Colonic mucosa (tissue), 4 donors: ENCODE measurements at regions of chr11 and their contacts with region 1.

Region 1: DNA sequence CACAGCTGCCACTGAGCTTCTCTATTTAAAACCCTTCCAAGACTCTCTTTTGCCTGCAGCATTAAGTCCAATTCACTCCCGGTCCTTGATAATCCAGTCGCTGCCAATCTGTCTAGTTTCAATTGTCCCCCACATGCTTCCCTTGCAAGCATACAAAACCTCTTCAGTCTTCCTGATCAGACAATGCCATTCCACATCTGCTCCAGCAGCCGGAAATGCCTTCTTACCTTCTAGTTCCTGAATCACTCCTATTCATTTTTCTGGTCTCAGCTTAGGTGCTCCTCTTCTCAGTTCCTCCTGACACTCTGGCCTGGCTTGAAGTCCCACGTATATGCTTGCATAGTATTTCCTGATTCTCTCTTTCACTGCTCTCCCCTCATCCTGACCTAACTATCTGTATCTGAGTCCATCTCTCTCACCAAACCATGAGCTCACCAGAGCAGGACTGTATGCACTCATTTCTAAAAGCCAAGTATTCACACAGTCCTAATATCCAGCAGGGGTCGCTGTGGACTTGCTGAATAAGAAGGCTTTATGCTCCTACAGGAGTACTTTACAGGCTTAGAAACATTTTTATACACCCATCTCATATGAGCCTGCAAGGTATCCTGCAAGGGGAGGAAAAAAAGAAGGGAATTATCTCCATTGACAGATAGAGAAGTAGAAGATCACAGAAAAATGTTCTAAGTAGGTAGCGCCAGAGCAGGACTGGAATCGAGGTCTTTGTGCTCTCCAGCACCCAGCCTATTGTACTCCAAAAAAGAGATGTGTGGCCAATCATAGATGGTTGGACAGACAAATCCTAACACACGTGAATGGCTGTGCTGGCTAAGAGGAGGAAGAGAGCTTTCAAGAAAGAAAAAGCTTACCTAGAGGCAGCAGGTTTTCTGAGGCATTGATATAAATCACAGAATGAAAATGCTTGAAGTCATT is 19.2 kb downstream of the XRRA1 start:
- DNase-seq: peak; percentile 78
- H3K4me3 ChIP-seq: no peak overlapping the region
- H3K27ac ChIP-seq: no peak overlapping the region
- H3K4me1 ChIP-seq: no peaks in the 10 kb centered on the region
- H3K27me3 ChIP-seq: no peaks in the 10 kb centered on the region
- CTCF ChIP-seq: peak; percentile 79

Region 2: GRCh38 chr11:74581954-74582547 is 347.6 kb before region 1 on chr11:
- intact Hi-C with region 1: no loop called
- DNase-seq: peak; percentile 79
- H3K4me3 ChIP-seq: no peak overlapping the region
- H3K27ac ChIP-seq: peak overlapping the region; percentile 43
- H3K4me1 ChIP-seq: no peaks in the 10 kb centered on the region
- H3K27me3 ChIP-seq: no peaks in the 10 kb centered on the region
- CTCF ChIP-seq: no peak

Region 3: DNA sequence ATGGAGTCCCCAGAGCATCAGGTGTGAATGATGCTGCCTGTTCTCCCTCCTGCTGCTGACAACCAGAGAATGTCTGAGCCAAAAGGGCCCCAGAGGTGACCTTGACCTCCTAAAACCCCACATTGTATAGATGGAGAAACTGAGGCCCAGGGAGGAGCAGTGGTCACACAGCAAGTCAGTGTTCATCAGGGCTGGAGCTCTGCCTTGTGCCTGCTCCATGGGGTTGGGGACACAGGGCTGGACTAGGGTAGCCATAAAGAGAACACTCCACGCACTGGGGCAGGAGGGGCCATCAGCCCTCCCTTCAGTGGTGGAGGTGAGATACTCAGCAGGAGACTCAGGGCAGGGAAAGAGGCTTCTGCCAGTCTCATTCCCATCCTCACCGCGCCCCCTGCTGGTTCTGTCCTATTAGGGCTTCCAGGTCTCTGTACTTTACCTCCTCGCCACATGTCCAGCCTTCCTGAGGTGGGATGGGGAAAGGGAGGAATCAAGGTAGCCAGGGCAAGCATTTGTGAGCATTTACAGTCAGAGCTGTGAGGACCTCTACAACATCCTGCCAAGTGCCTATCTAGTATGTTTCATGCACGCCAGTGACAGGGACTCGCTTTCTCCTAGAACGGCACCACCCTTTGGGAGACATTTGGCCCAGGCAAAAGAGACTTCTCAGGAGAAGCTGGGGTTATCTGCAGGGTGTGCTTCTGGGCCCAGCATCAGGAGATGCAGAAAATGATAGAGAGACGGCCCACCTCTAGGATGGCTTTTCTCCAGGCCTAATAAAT is 102.3 kb after region 1 on chr11:
- intact Hi-C with region 1: loop called (anchors 2 kb)
- DNase-seq: peak; percentile 77
- H3K4me3 ChIP-seq: no peak overlapping the region
- H3K27ac ChIP-seq: no peak overlapping the region
- H3K4me1 ChIP-seq: no peaks in the 10 kb centered on the region
- H3K27me3 ChIP-seq: no peaks in the 10 kb centered on the region
- CTCF ChIP-seq: peak; percentile 59

Region 4: DNA sequence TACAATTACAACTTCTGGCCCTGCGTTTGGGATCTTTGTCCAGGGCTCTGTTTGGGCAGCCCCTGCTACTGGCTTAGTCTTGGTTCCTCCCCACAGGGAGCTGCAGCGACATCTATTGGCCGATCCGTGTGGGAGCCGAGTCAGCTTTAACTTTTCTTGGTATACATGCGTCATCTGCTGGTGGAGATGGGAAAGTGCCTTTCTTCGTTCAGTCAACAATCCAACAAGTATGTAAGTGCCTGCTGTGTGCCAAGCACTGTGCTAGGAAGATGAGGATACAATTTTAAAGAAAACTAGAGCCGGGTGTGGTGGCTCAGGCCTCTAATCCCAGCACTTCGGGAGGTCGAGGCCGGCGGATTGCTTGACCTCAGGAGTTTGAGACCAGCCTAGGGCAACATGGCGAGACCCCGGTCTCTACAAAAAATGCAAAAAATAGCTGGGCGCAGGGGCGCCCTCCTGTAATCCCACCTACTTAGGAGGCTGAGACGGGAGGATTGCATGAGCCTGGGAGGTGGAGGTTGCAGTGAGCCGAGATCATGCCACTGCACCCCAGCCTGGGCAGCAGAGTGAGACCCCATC is 319.1 kb after region 1 on chr11:
- intact Hi-C with region 1: loop called (anchors 5 kb)
- DNase-seq: peak; percentile 93
- H3K4me3 ChIP-seq: no peak overlapping the region
- H3K27ac ChIP-seq: no peak overlapping the region
- H3K4me1 ChIP-seq: no peaks in the 10 kb centered on the region
- H3K27me3 ChIP-seq: peaks cover 2% of the 10 kb centered on the region
- CTCF ChIP-seq: peak; percentile 99

Region 5: DNA sequence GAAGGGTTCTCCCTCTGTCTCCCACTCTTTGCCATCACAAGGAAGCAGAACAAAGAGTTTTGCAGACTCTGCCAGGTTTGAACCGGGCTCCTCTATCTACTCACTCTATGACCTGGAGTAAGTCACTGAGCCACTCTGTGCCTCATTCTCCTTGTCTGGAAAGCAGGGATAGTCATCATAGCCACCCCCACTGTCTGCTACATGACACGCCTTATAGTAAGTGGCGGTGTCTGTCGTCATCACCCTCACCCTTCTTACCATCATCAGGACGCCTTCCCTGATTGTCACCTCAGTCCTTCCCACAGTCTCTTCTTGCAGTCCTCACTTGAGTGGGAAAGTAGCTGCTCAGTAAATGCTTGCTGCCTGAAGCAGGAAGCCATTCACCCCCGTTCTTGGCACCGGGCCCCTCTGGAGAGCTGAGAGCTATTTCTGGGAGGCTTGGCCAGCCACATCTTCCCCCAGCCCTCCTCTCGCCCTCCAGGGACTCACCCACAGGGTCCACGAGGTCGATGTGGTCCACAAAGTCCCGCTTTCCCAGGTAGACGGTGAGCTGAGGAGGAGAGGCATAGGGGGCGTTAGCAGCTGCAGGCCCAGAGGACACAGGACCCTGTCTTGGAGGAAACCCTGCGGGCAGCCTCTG is 357.2 kb after region 1 on chr11:
- intact Hi-C with region 1: no loop called
- DNase-seq: no peak
- H3K4me3 ChIP-seq: no peak overlapping the region
- H3K27ac ChIP-seq: no peak overlapping the region
- H3K4me1 ChIP-seq: no peaks in the 10 kb centered on the region
- H3K27me3 ChIP-seq: no peaks in the 10 kb centered on the region
- CTCF ChIP-seq: no peak

Region 6: GRCh38 chr11:75313513-75314272 is 384.0 kb after region 1 on chr11:
- intact Hi-C with region 1: no loop called
- DNase-seq: peak; percentile 62
- H3K4me3 ChIP-seq: no peak overlapping the region
- H3K27ac ChIP-seq: peak overlapping the region; percentile 76
- H3K4me1 ChIP-seq: peaks cover 37% of the 10 kb centered on the region
- H3K27me3 ChIP-seq: no peaks in the 10 kb centered on the region
- CTCF ChIP-seq: no peak